PC-9 (cell line): ENCODE measurements at regions of chr3 and their contacts with region 1.

Region 1: DNA sequence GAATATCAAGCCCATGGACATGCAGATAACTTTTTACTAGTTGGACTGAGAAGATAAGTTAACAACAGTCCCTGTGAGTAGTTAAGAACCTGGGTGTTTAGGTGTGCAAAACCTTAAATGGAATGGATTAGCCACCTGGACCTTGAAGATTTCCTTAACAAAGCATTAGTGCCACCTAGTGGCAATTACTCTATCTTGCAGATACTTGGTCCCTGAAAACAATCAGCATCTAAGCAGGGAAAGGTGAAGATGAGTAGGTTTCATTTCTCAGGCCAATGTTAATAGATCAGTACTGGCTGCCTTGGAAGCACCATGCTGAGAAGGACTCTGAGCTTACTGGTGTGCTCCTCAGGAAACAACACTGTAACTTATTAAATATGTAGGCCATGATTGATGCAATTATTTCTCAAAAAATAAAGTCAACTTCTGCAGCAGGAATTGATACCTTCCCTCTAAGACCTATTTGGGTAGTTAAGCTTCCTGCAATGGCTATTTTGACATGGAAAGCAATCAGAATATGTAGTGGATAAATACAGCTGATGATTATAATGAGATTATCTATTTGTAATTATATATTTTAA is 329.4 kb downstream of the TBC1D5 start:
- DNase-seq: peak in 1 of 2 experiments; percentile 8
- H3K4me3 ChIP-seq: no peak overlapping the region
- H3K27ac ChIP-seq: no peak overlapping the region
- H3K4me1 ChIP-seq: no peaks in the 10 kb centered on the region
- H3K27me3 ChIP-seq: no peaks in the 10 kb centered on the region
- CTCF ChIP-seq: peak; percentile 91

Region 2: GRCh38 chr3:17258823-17259436 is 154.1 kb before region 1 on chr3:
- CTCF ChIA-PET with region 1: no interaction called
- POLR2A ChIA-PET with region 1: no interaction called
- intact Hi-C with region 1: loop called (anchors 5 kb)
- DNase-seq: no peak
- H3K4me3 ChIP-seq: no peak overlapping the region
- H3K27ac ChIP-seq: no peak overlapping the region
- H3K4me1 ChIP-seq: no peaks in the 10 kb centered on the region
- H3K27me3 ChIP-seq: no peaks in the 10 kb centered on the region
- CTCF ChIP-seq: peak; percentile 88